Body of pancreas (tissue), 4 donors: ENCODE measurements at regions of chr16 and their contacts with region 1.

Region 1: GRCh38 chr16:68040507-68041288 is 17.6 kb downstream of the DUS2 start:
- DNase-seq: peak; percentile 85 to 91 (median 86)
- ATAC-seq: peak; percentile 94
- H3K4me3 ChIP-seq: no peak overlapping the region
- H3K27ac ChIP-seq: no peak overlapping the region
- H3K4me1 ChIP-seq: no peaks in the 10 kb centered on the region
- H3K27me3 ChIP-seq: no peaks in the 10 kb centered on the region
- CTCF ChIP-seq: peak; percentile 71 to 87 (median 79)
- POLR2A ChIP-seq: no peak

Region 2: DNA sequence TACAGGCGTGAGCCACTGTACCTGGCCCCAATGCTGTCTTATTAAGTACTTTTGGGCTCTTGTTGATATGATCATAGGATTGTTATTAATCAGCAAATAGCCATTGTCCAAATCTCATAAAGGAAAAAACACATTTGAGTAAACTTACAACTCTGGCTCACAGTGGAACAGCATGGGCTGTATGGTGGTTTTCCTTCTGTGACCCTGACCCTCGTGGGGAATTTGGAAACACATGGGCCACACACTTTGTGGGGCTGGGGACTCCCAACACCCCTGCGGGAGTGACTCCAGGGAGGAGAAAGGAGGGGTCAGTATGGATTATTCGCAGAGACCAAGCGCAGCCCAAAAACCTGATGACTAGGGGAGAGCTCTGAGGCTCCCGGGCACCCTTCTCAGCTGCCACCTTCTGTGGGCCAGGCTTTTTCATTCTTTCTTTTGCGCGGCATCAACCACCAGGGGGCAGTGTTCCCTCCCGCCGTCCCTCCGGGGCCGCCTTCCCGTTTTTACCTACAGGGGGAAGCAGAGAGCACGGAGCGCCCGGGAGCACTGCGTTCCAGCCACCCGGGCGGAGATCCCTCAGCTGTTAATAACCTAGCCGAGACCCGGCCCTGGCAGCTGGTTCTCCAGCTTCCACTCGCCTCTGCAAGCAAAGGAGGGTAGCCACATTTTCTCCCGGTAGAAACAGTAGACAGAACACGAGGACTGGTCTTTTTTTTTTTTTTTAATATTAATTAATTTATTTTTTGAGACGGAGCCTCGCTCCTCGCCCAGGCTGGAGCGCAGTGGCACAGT is 224.3 kb before region 1 on chr16:
- intact Hi-C with region 1: loop called (anchors 10 kb)
- DNase-seq: peak; percentile 87 to 90 (median 88)
- ATAC-seq: peak; percentile 99
- H3K4me3 ChIP-seq: no peak overlapping the region
- H3K27ac ChIP-seq: peak overlapping the region in 1 of 4 donors; percentile 53
- H3K4me1 ChIP-seq: no peaks in the 10 kb centered on the region
- H3K27me3 ChIP-seq: no peaks in the 10 kb centered on the region
- CTCF ChIP-seq: peak; percentile 100
- POLR2A ChIP-seq: no peak

Region 3: DNA sequence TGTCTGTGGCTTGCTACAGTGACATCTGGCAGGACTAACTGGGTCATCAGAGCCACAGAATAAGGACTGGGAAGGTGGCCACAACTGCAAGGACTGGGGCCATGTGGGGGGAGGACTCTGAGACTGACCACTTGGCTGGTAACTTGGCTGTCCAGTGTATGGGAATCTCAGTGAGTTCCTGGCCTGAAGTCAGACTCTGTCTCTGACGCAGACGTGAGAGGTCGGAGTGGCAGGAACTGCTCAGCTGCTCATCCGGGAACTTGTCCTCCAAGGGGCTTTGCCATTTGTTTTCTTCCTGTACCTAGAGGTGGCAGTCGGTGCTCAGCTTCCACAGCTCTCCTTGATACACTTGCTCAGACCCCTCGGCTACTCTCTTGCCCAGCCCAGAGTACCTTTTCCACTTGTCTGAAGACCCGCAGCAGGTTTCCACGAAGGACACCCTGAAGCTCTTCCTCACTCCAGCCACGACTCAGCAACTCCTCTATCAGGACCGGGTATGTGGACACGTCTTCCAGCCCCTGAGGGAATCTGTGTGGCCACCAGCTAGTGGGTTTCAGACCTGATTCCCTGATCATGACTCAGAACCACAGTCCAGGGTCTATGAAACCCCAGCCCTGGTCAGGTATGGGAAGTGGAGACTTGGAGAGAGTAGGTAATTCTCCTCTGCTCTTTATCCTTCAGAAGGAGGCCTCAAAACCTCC is 53.1 kb before region 1 on chr16:
- intact Hi-C with region 1: no loop called
- DNase-seq: peak in 1 of 4 donors; percentile 13
- ATAC-seq: peak; percentile 42
- H3K4me3 ChIP-seq: no peak overlapping the region
- H3K27ac ChIP-seq: peak overlapping the region in 1 of 4 donors; percentile 33
- H3K4me1 ChIP-seq: peaks cover 3% of the 10 kb centered on the region
- H3K27me3 ChIP-seq: no peaks in the 10 kb centered on the region
- CTCF ChIP-seq: no peak
- POLR2A ChIP-seq: no peak

Region 4: DNA sequence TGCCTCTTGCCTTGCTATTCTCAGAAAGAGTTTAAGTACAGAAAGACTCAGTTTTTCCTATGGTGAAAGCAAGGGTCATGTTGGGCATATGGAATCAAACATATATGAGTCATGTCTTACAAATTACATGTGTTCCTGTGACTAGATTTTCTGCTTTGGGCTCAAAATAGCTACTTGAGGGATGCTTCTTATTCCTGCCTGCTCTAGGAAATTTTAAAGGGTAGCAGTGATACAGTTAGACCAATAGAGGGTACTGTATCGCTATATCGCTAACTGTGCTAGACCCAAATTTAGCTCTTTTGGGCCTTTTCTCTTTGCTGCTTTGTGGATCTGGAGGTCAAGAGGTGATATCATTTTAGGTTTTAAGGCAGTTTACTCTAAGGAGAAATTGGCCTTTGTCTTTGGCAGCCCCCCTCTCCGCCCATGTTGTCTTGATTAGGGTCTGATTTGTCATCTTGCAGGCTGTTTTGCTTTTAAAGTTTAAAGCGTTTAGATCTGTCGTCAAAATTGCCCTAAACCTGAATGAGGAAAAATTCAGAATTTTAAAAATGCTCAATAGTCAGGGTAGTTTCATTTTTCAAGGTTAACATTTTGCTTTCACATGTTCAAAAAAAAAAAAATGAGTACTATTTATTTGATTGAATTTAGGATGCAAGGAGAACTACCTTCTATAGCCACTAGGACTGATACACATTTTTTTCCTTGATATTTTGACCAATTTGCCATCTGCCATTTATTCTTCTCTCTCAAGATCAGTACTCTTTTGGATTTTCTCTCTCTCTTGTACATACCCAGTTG is 53.3 kb after region 1 on chr16:
- intact Hi-C with region 1: no loop called
- DNase-seq: no peak
- ATAC-seq: no peak
- H3K4me3 ChIP-seq: no peak overlapping the region
- H3K27ac ChIP-seq: no peak overlapping the region
- H3K4me1 ChIP-seq: peaks cover 27% of the 10 kb centered on the region
- H3K27me3 ChIP-seq: no peaks in the 10 kb centered on the region
- CTCF ChIP-seq: peak in 3 of 7 experiments; percentile 16 to 26 (median 17)
- POLR2A ChIP-seq: no peak

Region 5: GRCh38 chr16:68264128-68265077 is 223.7 kb after region 1 on chr16 and contains the start of gene SLC7A6:
- intact Hi-C with region 1: no loop called
- DNase-seq: peak; percentile 65 to 77 (median 68)
- ATAC-seq: peak; percentile 83
- H3K4me3 ChIP-seq: peak within 1 kb of the TSS; percentile 34 to 64
- H3K27ac ChIP-seq: peak within 1 kb of the TSS; percentile 59 to 84 (median 72)
- H3K4me1 ChIP-seq: peaks cover 17% of the 10 kb centered on the region
- H3K27me3 ChIP-seq: no peaks in the 10 kb centered on the region
- CTCF ChIP-seq: peak; percentile 45 to 70 (median 61)
- POLR2A ChIP-seq: peak in 2 of 3 donors; percentile 8 to 24
- total RNA-seq, gene SLC7A6: 10.9 to 23.4 TPM